IMR-90 (cell line): ENCODE measurements at regions of chr5 and their contacts with region 1.

Region 1: GRCh38 chr5:53590759-53591158 is 30.3 kb downstream of the NDUFS4 start:
- DNase-seq: no peak
- ATAC-seq: no peak
- H3K4me3 ChIP-seq: no peak overlapping the region
- H3K27ac ChIP-seq: no peak overlapping the region
- H3K4me1 ChIP-seq: no peaks in the 10 kb centered on the region
- H3K27me3 ChIP-seq: no peaks in the 10 kb centered on the region
- CTCF ChIP-seq: no peak
- POLR2A ChIP-seq: no peak
- RAD21 ChIP-seq: no peak

Region 2: DNA sequence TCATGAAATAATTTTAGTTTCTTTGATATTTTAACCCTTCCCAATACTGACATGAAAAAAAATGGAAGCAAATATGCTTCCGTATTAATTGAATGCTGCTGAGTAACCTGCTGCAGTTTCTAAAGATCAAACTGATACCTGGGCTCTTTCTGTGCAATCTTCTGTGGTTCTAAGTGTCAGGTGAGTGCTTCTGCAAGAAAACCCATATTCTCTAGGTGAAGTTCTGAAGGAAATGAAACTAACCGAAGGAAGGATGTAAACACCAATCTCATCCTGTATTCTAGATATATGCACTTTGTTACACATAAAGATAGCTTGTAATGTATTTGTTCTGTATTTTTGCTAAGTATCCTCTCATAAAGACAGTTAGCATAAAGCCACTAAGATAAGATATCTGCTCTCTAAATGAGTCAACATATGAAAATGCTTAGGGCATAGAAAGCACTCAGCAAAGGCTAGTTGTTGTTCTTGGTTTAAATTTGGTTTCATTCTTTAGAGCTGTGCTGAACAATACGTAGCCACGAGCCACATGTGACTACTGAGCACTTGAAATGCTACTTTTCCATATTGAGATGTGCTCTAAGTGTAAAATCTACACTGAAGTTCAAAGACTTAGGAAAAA is 549.6 kb before region 1 on chr5:
- CTCF ChIA-PET with region 1: no interaction called
- POLR2A ChIA-PET with region 1: no interaction called
- dilution Hi-C with region 1: no loop called
- in situ Hi-C with region 1: no loop called
- intact Hi-C with region 1: no loop called
- DNase-seq: peak; percentile 65
- ATAC-seq: peak; percentile 52
- H3K4me3 ChIP-seq: no peak overlapping the region
- H3K27ac ChIP-seq: peak overlapping the region; percentile 20; the same call in 1 of the 2 replicates
- H3K4me1 ChIP-seq: peaks cover 15% of the 10 kb centered on the region
- H3K27me3 ChIP-seq: no peaks in the 10 kb centered on the region
- CTCF ChIP-seq: no peak
- POLR2A ChIP-seq: no peak
- RAD21 ChIP-seq: no peak

Region 3: DNA sequence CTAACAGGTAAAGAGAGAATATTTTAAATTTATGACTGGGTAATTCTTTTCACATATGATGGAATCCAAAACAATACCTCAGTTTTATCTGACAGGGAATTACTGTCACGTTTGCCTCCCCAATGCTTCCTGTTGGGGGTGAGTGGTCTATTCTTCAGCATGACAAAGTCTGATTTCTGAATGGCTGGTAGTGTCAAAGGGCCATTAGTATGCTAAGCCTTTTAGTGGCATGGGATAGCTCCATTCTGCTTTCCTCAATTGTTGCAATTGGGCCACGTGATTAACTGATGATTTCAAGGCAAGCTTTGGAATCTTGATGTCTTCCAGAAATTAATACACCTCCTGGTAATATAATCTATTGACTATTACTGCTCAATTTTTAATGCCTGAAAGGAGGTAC is 45.0 kb before region 1 on chr5:
- CTCF ChIA-PET with region 1: no interaction called
- POLR2A ChIA-PET with region 1: no interaction called
- dilution Hi-C with region 1: no loop called
- in situ Hi-C with region 1: no loop called
- intact Hi-C with region 1: loop called (anchors 5 kb)
- DNase-seq: no peak
- ATAC-seq: no peak
- H3K4me3 ChIP-seq: no peak overlapping the region
- H3K27ac ChIP-seq: no peak overlapping the region
- H3K4me1 ChIP-seq: no peaks in the 10 kb centered on the region
- H3K27me3 ChIP-seq: no peaks in the 10 kb centered on the region; the same call in 1 of the 2 replicates
- CTCF ChIP-seq: no peak
- POLR2A ChIP-seq: no peak
- RAD21 ChIP-seq: no peak

Region 4: GRCh38 chr5:53856506-53856905 is 265.7 kb after region 1 on chr5:
- CTCF ChIA-PET with region 1: no interaction called
- POLR2A ChIA-PET with region 1: no interaction called
- dilution Hi-C with region 1: no loop called
- in situ Hi-C with region 1: no loop called
- intact Hi-C with region 1: no loop called
- DNase-seq: no peak
- ATAC-seq: no peak
- H3K4me3 ChIP-seq: no peak overlapping the region
- H3K27ac ChIP-seq: no peak overlapping the region
- H3K4me1 ChIP-seq: no peaks in the 10 kb centered on the region
- H3K27me3 ChIP-seq: no peaks in the 10 kb centered on the region
- CTCF ChIP-seq: no peak
- POLR2A ChIP-seq: no peak
- RAD21 ChIP-seq: no peak

Region 5: DNA sequence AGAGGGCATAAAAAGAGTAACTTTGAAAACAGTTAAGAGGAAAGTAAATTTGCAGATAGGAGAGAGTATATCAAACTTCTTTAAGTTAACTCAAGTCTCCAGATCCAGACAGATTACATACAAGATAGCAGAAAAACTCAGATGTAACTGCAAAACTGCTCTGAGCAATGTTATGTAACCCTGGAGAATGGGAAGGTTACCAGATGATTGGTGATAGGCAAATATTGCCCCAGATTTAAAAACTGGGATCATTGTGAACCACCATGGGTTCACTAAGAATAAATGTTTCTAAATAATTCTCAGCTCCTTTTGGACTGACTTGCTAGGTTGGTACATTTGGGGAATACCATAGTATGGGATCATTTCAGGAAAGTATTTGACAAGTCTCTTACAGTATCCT is 543.2 kb after region 1 on chr5:
- CTCF ChIA-PET with region 1: no interaction called
- POLR2A ChIA-PET with region 1: interaction called, 10 read pairs
- dilution Hi-C with region 1: no loop called
- in situ Hi-C with region 1: no loop called
- intact Hi-C with region 1: no loop called
- DNase-seq: no peak
- ATAC-seq: no peak
- H3K4me3 ChIP-seq: no peak overlapping the region
- H3K27ac ChIP-seq: no peak overlapping the region
- H3K4me1 ChIP-seq: peaks cover 5% of the 10 kb centered on the region
- H3K27me3 ChIP-seq: no peaks in the 10 kb centered on the region
- CTCF ChIP-seq: no peak
- POLR2A ChIP-seq: no peak
- RAD21 ChIP-seq: no peak